Lower leg skin (tissue), 4 donors: ENCODE measurements at regions of chr12 and their contacts with region 1.

Region 1: GRCh38 chr12:102755266-102755665 is 161.8 kb downstream of the PAH start:
- DNase-seq: no peak
- H3K4me3 ChIP-seq: no peak overlapping the region
- CTCF ChIP-seq: no peak
- POLR2A ChIP-seq: no peak

Region 2: DNA sequence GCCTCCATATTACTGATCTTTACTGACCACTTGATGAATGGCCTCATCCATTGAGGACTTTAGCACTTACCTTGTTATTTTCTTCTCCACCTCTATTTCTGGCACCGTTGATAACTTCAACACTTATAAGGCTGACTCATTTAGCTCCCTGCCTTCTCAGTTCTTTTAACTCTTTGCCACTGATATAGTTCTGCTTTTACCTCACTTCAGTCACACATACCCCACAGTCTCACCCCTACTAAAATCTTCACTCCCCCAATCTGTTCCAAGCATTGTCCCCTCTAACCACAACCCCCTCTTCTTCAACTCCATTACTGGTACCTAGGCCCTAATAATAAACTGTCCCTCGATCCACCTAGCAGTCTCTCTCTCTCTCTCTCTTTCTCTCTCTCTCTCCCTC is 20.8 kb after region 1 on chr12:
- intact Hi-C with region 1: loop called (anchors 1 kb)
- DNase-seq: no peak
- H3K4me3 ChIP-seq: no peak overlapping the region
- CTCF ChIP-seq: no peak
- POLR2A ChIP-seq: no peak